Activated CD4-positive, alpha-beta T cell treated with anti-CD3 and anti-CD28 coated beads, Interleukin-2, amount 10 ng/mL, durations not matched to agents 24 days and 14 days (primary cell): ENCODE measurements at regions of chr10 and their contacts with region 1.

Region 1: DNA sequence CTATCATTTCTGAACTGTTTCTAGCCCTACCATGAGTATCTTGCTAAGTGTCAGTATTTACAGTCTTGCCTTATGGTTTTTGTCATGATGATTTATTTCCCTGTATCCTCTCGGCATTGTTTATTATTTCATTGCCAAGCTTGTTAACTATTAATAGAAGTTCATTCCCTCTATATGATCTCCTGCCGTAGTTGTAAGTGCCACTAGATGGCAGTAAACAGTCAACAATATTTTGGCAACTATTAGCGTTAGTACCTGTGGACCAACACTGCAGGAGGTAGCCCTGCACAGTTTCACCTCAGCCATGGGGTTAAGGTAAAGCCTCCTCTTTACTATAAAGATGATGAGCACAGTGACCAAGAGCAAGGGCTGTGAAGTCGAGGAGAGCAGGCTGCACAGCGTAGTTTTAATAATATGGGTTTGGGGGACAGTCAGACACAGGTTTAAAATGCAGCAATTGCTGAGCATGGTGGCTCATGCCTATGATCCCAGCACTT is 26.1 kb upstream of the CCNJ start:
- DNase-seq: peak; percentile 85
- H3K4me3 Mint-ChIP-seq: no peak overlapping the region
- H3K27ac Mint-ChIP-seq: no peak overlapping the region
- H3K4me1 Mint-ChIP-seq: peaks cover 2% of the 10 kb centered on the region
- H3K27me3 Mint-ChIP-seq: peaks cover 11% of the 10 kb centered on the region

Region 2: GRCh38 chr10:95693668-95694534 is 323.3 kb before region 1 on chr10 and contains the start of gene TCTN3:
- intact Hi-C with region 1: no loop called
- DNase-seq: peak; percentile 99
- H3K4me3 Mint-ChIP-seq: peak within 1 kb of the TSS; percentile 99
- H3K27ac Mint-ChIP-seq: peak within 1 kb of the TSS; percentile 97
- H3K4me1 Mint-ChIP-seq: peaks cover 31% of the 10 kb centered on the region
- H3K27me3 Mint-ChIP-seq: no peaks in the 10 kb centered on the region
- total RNA-seq, gene TCTN3: 42.7 and 44.6 TPM in 2 replicates

Region 3: GRCh38 chr10:96339957-96340904 is 323.0 kb after region 1 on chr10:
- intact Hi-C with region 1: loop called (anchors 1 kb)
- DNase-seq: peak; percentile 85
- H3K4me3 Mint-ChIP-seq: no peak overlapping the region
- H3K27ac Mint-ChIP-seq: no peak overlapping the region
- H3K4me1 Mint-ChIP-seq: no peaks in the 10 kb centered on the region
- H3K27me3 Mint-ChIP-seq: peaks cover 12% of the 10 kb centered on the region